Endothelial cell of umbilical vein (primary cell): ENCODE measurements at regions of chr18 and their contacts with region 1.

Region 1: GRCh38 chr18:6056146-6056932 is 161.0 kb upstream of the TMEM200C start:
- DNase-seq: peak; percentile 77
- H3K4me3 ChIP-seq: peak overlapping the region in 1 of 3 experiments; percentile 20
- H3K27ac ChIP-seq: peak overlapping the region; percentile 96
- H3K4me1 ChIP-seq: peaks cover 21% of the 10 kb centered on the region
- H3K27me3 ChIP-seq: no peaks in the 10 kb centered on the region
- CTCF ChIP-seq: no peak
- POLR2A ChIP-seq: peak; percentile 41

Region 2: DNA sequence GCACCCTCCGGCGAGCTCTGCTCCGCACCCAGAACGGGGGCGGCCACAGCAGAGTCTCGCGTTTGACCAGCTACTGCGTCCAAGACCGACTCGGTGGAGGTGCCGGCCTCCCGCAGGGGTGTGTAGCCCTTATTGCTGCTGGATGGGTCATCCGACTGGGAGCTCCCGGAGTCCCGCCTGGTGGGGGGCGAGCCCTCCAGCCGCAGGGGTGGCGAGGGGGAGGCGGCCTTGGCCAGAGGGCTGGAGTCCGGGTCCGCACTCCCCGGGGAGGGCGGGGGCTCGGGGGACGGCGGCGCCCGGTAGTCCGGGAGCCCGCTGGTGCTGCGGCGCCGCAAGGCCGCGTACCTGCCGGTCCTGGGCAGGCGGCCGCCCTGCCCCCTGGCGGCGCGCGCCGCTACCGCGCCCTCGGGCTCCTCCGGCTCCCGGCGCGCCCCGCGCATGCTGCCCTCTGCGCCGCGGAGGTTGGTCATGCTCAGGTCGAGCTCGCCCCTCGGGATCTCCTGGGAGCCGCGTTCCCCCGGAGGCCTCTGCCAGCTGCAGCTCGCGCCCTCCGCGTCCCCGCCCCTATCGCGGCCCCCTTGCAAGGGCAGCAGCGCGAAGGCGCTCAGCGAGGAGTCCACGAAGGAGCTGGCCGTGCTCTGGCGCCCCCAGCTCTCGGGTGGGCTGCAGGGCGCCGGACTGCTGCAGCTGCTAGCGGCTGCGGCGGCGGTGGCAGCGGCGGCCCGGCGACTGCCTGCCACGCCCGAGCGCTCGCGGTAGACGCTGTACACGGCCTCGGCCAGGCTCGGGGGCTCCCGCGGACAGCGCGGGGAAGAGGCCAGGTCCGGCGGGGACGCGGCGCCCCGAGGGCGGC is 165.8 kb before region 1 on chr18:
- CTCF ChIA-PET with region 1: interaction called, 3 read pairs
- POLR2A ChIA-PET with region 1: no interaction called
- dilution Hi-C with region 1: no loop called
- intact Hi-C with region 1: loop called (anchors 5 kb)
- DNase-seq: peak; percentile 15
- H3K4me3 ChIP-seq: peak overlapping the region in 2 of 3 experiments; percentile 32 to 34
- H3K27ac ChIP-seq: no peak overlapping the region
- H3K4me1 ChIP-seq: peaks cover 3% of the 10 kb centered on the region
- H3K27me3 ChIP-seq: peaks cover 37 to 54% of the 10 kb centered on the region in 2 experiments
- CTCF ChIP-seq: peak; percentile 33 to 58
- POLR2A ChIP-seq: no peak